Right lobe of liver (tissue), 6 donors: ENCODE measurements at regions of chr11 and their contacts with region 1.

Region 1: GRCh38 chr11:62905927-62906531 is 15.1 kb downstream of the CHRM1 start:
- DNase-seq: peak; percentile 72 to 85 (median 83)
- ATAC-seq: peak; percentile 87 to 95 (median 92)
- H3K4me3 ChIP-seq: no peak overlapping the region
- H3K27ac ChIP-seq: no peak overlapping the region
- H3K4me1 ChIP-seq: no peaks in the 10 kb centered on the region
- H3K27me3 ChIP-seq: no peaks in the 10 kb centered on the region
- CTCF ChIP-seq: peak; percentile 96 to 98 (median 98)
- POLR2A ChIP-seq: no peak

Region 2: DNA sequence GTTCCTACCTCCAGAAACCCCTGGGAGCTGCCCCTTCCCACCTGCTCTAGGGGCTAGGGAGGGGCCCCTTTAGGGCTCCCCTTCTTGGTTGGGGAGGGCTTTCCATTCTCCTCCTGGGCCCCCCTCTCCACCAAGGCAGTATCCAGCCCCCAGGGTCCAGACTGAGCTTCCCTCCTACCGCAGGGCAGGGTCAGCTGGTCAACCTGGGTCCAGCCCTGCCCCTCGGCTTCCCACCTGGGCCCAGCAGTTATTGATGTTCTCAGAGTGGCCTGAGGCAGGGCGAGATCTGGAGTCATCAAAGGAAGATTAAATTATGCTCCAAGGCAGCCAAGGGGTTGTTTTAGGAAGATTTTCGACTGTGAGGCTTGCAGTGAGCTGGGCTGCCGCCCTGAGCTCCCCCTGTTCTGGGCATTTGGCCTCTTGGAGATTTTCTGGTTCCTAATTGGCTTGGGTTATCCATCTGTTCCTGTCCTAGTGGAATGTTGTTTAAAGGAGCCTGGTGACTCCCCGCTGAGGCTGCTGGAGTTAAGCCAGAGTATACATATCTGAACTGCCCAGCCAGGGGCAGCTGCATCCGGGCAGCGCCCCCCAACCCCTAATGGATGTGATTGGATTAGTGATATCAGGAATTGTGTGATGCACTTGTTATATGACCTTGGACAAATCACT is 111.4 kb after region 1 on chr11:
- intact Hi-C with region 1: loop called (anchors 2 to 5 kb)
- DNase-seq: no peak
- ATAC-seq: no peak
- H3K4me3 ChIP-seq: no peak overlapping the region
- H3K27ac ChIP-seq: no peak overlapping the region
- H3K4me1 ChIP-seq: no peaks in the 10 kb centered on the region
- H3K27me3 ChIP-seq: no peaks in the 10 kb centered on the region
- CTCF ChIP-seq: no peak
- POLR2A ChIP-seq: no peak

Region 3: DNA sequence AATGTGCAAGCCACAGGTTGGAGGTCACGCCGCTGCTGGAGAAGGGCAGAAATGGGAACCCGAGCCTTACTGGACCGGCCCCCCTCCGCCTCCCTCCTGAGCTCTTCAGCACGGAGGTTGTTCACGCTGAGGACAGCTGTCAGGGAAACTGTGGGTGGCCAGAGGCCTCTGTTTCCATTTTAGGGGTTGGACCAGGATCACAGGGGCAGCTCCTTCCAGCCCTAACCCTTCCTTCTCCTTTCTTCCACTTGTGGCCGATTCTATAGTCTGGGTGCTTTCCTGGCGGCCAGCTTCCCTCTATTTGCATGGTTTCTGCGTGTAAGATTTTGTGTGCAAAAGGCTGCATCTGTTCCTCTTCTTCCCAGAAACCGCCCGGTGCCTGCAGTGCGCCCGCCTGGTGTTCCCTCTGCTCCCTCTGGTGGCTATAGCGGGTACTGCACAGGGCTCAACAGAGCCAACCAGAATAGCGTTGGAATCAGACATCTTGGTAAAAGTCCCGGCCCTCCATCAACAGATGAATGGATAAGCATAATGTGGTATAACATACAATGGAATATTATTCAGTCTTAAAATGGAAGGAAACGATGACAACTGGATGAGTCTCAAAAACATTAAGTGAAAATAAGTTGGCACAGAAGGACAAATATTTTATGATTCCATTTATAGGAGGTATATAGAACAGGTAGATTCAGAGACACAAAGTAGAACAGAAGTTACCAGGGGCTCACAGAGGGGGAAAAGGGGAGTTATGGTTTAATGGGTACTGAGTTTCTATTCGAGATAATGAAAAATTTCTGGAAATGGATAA is 118.0 kb after region 1 on chr11:
- intact Hi-C with region 1: loop called (anchors 2 to 5 kb)
- DNase-seq: peak; percentile 84
- ATAC-seq: peak; percentile 96 to 100 (median 98)
- H3K4me3 ChIP-seq: no peak overlapping the region
- H3K27ac ChIP-seq: no peak overlapping the region
- H3K4me1 ChIP-seq: no peaks in the 10 kb centered on the region
- H3K27me3 ChIP-seq: no peaks in the 10 kb centered on the region
- CTCF ChIP-seq: peak; percentile 99 to 100 (median 99)
- POLR2A ChIP-seq: no peak